CD4-positive, alpha-beta T cell (primary cell): ENCODE measurements at regions of chr14 and their contacts with region 1.

Region 1: DNA sequence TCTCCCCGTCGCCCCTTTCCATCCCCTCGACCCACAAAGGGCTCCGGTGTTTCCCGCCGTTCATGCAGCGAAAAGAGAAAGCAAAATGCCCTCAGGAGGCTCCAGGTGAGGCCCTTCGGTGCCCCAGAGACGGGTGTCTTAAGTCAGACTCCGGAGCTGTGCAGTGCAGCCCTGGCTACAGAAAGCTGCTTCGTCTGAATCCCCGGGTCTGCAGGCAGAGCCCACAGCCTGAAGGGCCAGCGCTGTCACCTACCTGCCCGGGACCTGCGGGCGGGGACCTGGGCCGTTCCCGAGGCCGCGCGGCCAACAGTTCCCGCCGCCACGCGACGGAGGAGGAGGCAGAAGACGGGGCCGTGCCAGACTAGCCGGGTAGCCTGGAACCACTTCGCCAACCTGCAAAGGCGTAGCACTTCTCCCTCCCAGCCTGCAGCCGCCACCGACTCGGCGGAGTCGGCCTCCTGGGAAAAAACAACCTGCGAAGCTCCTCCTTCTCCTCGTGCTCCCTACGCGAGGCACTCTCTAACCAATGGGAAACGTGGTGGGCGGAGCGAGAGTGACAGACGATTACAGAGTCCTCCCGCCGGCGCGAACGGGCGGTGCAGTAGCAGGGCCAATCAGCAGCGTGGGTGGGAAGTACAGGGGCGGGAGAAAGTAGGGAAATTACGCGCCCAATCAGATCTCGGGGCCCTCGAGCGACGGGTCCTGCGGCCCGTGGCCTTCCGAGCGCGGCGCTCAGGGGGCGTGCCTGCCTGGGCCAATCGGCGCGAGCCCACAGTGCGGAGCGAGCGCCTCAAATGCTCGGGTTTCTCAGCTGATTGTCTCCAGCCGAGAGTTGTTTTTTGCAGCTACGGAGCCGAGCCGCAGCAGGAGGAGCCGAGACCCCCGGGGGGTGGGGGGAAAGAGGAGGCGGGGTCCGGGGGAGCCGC is at the starts of genes GPR137C and TXNDC16:
- DNase-seq: peak; percentile 98 to 100 (median 99)
- ATAC-seq: peak; percentile 85
- H3K4me3 ChIP-seq: peak within 1 kb of the TSS; percentile 95
- H3K4me3 Mint-ChIP-seq: peak within 1 kb of the TSS; percentile 98
- H3K27ac ChIP-seq: peak within 1 kb of the TSS; percentile 80 to 88
- H3K27ac Mint-ChIP-seq: peak within 1 kb of the TSS; percentile 91
- H3K4me1 ChIP-seq: peaks cover 32% of the 10 kb centered on the region
- H3K4me1 Mint-ChIP-seq: peaks cover 39% of the 10 kb centered on the region
- H3K27me3 ChIP-seq: no peaks in the 10 kb centered on the region
- H3K27me3 Mint-ChIP-seq: peaks cover 15% of the 10 kb centered on the region
- CTCF ChIP-seq: no peak
- total RNA-seq, gene GPR137C: 0.08 to 0.19 TPM
- total RNA-seq, gene TXNDC16: 10.4 to 11.4 TPM

Region 2: GRCh38 chr14:51989293-51990234 is 562.8 kb before region 1 on chr14 and contains the start of gene RTRAF:
- CTCF ChIA-PET with region 1: no interaction called
- POLR2A ChIA-PET with region 1: no interaction called
- intact Hi-C with region 1: loop called in 1 of 2 experiments (anchors 5 kb)
- DNase-seq: peak; percentile 83 to 97 (median 89)
- ATAC-seq: peak; percentile 96
- H3K4me3 ChIP-seq: peak within 1 kb of the TSS; percentile 87
- H3K4me3 Mint-ChIP-seq: peak within 1 kb of the TSS; percentile 99
- H3K27ac ChIP-seq: peak within 1 kb of the TSS; percentile 84 to 87
- H3K27ac Mint-ChIP-seq: peak within 1 kb of the TSS; percentile 94
- H3K4me1 ChIP-seq: peaks cover 18% of the 10 kb centered on the region
- H3K4me1 Mint-ChIP-seq: peaks cover 53% of the 10 kb centered on the region
- H3K27me3 ChIP-seq: no peaks in the 10 kb centered on the region
- H3K27me3 Mint-ChIP-seq: no peaks in the 10 kb centered on the region
- CTCF ChIP-seq: no peak
- total RNA-seq, gene RTRAF: 155 to 157 TPM

Region 3: GRCh38 chr14:52695481-52696091 is 143.3 kb after region 1 on chr14 and contains the start of gene ERO1A:
- CTCF ChIA-PET with region 1: no interaction called
- POLR2A ChIA-PET with region 1: interaction called, 24 read pairs
- intact Hi-C with region 1: loop called in 1 of 2 experiments (anchors 5 kb)
- DNase-seq: peak in 13 of 14 experiments; percentile 26 to 85 (median 49)
- ATAC-seq: peak; percentile 55
- H3K4me3 ChIP-seq: peak within 1 kb of the TSS; percentile 92
- H3K4me3 Mint-ChIP-seq: peak within 1 kb of the TSS; percentile 99
- H3K27ac ChIP-seq: peak within 1 kb of the TSS; percentile 54 to 91
- H3K27ac Mint-ChIP-seq: peak within 1 kb of the TSS; percentile 89
- H3K4me1 ChIP-seq: peaks cover 31% of the 10 kb centered on the region
- H3K4me1 Mint-ChIP-seq: peaks cover 44% of the 10 kb centered on the region
- H3K27me3 ChIP-seq: no peaks in the 10 kb centered on the region
- H3K27me3 Mint-ChIP-seq: no peaks in the 10 kb centered on the region
- CTCF ChIP-seq: no peak
- total RNA-seq, gene ERO1A: 58.6 to 60.7 TPM

Region 4: DNA sequence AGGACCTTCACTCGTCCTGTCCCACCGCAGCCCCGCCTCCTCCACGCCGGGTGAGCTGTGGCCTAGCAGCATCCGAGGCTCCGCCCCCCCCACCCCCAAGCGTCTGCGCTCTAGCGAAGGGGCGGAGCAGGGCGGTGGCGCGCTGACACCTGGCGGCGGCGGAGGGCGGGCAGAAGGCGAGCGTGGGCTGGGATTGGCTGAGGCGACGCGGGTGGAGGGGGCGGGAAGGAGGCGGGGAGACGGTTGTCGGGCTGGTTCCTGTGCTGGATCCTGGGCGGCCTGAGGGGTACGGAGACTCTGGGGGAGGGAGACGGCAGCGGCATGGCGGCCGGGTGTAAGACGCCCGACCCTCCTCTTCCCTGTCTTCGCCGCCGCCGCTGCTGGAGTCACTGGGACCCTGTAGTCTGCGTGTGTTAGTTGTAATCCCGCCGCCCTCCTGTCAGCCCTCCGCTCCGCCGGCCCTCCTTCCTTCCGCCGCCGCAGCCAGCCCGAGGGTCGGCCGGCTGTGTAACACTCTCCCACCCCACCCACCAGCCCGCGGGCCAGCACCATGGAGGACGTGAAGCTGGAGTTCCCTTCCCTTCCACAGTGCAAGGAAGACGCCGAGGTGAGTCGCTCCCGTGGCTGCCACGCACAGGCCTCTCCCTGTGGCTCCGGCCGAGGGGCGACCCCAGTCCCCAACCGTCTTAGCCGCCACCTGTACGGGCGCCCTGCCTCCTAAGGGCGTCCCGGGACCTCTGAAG is 177.8 kb after region 1 on chr14 and contains the start of gene STYX:
- CTCF ChIA-PET with region 1: no interaction called
- POLR2A ChIA-PET with region 1: interaction called, 10 read pairs
- intact Hi-C with region 1: loop called in 1 of 2 experiments (anchors 5 kb)
- DNase-seq: peak; percentile 94 to 100 (median 98)
- ATAC-seq: peak; percentile 95
- H3K4me3 ChIP-seq: peak within 1 kb of the TSS; percentile 100
- H3K4me3 Mint-ChIP-seq: peak within 1 kb of the TSS; percentile 93
- H3K27ac ChIP-seq: peak within 1 kb of the TSS; percentile 84 to 89
- H3K27ac Mint-ChIP-seq: peak within 1 kb of the TSS; percentile 94
- H3K4me1 ChIP-seq: peaks cover 36% of the 10 kb centered on the region
- H3K4me1 Mint-ChIP-seq: peaks cover 36% of the 10 kb centered on the region
- H3K27me3 ChIP-seq: no peaks in the 10 kb centered on the region
- H3K27me3 Mint-ChIP-seq: no peaks in the 10 kb centered on the region
- CTCF ChIP-seq: no peak
- total RNA-seq, gene STYX: 15.3 to 16.2 TPM

Region 5: GRCh38 chr14:52950898-52951689 is 398.8 kb after region 1 on chr14 and contains the start of gene FERMT2:
- CTCF ChIA-PET with region 1: no interaction called
- POLR2A ChIA-PET with region 1: no interaction called
- intact Hi-C with region 1: loop called in 1 of 2 experiments (anchors 10 kb)
- DNase-seq: peak in 5 of 14 experiments; percentile 31 to 37 (median 34)
- ATAC-seq: peak; percentile 30
- H3K4me3 ChIP-seq: peak within 1 kb of the TSS; percentile 51
- H3K4me3 Mint-ChIP-seq: peak within 1 kb of the TSS; percentile 72
- H3K27ac ChIP-seq: no peak within 1 kb of the TSS
- H3K27ac Mint-ChIP-seq: no peak within 1 kb of the TSS
- H3K4me1 ChIP-seq: peaks cover 19% of the 10 kb centered on the region
- H3K4me1 Mint-ChIP-seq: peaks cover 22% of the 10 kb centered on the region
- H3K27me3 ChIP-seq: peaks cover 37 to 59% of the 10 kb centered on the region in 2 experiments
- H3K27me3 Mint-ChIP-seq: peaks cover 54% of the 10 kb centered on the region
- CTCF ChIP-seq: no peak
- total RNA-seq, gene FERMT2: 0.44 to 0.61 TPM